ENCODE measurements at regions of chr6 and their contacts with region 1.

Region 1: GRCh38 chr6:31958741-31959739 is at the starts of genes NELFE and SKIC2:
- DNase-seq: peak; percentile 98 to 100 (median 99)
- H3K4me3 ChIP-seq: peak within 1 kb of the TSS; percentile 61 to 100 (median 94)
- H3K27ac ChIP-seq: peak within 1 kb of the TSS in 58 of 59 donors; percentile 10 to 93 (median 81)
- H3K27me3 ChIP-seq: no peaks in the 10 kb centered on the region
- CTCF ChIP-seq: peak in 26 of 56 donors; percentile 4 to 53 (median 26)
- total RNA-seq, gene NELFE: 28.5 to 67.8 (median 43.3) TPM
- total RNA-seq, gene SKIC2: 48.6 to 115 (median 68.4) TPM

Region 2: GRCh38 chr6:31702819-31703522 is 256.1 kb before region 1 on chr6 and contains the start of gene ABHD16A:
- intact Hi-C with region 1: loop called in 1 of 2 experiments (anchors 5 kb)
- DNase-seq: peak; percentile 98 to 99 (median 99)
- H3K4me3 ChIP-seq: peak within 1 kb of the TSS; percentile 69 to 98 (median 88)
- H3K27ac ChIP-seq: peak within 1 kb of the TSS; percentile 58 to 99 (median 97)
- H3K27me3 ChIP-seq: no peaks in the 10 kb centered on the region
- CTCF ChIP-seq: peak in 38 of 56 donors; percentile 7 to 49 (median 33)
- total RNA-seq, gene ABHD16A: 43.5 to 81.1 (median 56.8) TPM

Region 3: DNA sequence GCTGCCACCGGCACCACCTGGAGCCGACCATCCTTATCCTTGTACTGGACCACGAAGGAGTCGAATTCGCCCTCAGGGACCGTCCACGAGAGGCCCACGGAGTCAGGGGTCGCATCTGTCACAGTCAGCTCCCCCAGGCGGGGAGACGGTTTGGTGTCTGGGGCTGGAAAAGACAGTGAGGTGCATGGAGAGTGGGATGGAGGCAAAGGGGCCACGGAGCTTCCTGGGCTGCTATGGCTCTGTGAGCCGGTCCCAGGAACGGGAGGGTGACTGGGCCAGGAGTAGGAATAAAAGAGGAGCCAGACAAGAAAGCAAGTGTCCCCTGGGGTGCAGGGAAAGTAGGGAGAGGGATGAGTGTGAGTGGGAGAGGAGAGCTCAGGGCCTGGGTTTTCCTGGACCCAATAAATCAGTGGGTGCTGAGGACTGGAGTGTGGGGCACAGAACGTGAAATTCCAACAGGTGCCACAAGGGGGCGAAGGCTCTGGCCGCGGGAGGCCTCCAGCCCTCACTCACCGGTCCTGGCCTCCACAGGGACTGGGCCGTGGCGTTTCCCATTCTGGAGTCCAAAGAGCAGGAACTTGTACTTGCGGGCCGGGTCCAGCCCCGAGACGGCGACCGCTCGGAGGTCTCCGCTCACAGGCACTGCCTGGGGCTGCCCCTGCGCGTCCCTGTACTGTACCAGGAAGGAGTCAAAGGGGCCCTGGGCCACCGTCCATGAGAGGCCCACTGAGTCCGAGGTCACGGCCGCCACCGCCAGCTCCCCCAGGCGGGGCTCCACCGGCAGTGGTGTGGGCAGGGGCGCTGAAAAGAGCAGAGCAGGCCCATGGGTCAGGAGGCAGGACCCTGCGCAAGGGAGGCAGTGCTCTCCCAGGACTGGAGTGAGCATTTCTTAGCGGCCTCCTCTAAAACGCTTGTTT is 89.1 kb after region 1 on chr6:
- intact Hi-C with region 1: no loop called
- DNase-seq: peak in 7 of 10 donors; percentile 40 to 77 (median 52)
- H3K4me3 ChIP-seq: no peak overlapping the region
- H3K27ac ChIP-seq: peak overlapping the region in 15 of 59 donors; percentile 4 to 69 (median 36)
- H3K27me3 ChIP-seq: no peaks in the 10 kb centered on the region
- CTCF ChIP-seq: peak; percentile 58 to 89 (median 79)

Region 4: GRCh38 chr6:32092760-32093497 is 133.9 kb after region 1 on chr6:
- intact Hi-C with region 1: no loop called
- DNase-seq: peak in 5 of 10 donors; percentile 35 to 88 (median 57)
- H3K4me3 ChIP-seq: no peak overlapping the region
- H3K27ac ChIP-seq: peak overlapping the region in 49 of 59 donors; percentile 4 to 83 (median 58)
- H3K27me3 ChIP-seq: peaks cover 0 to 26% (median 13%) of the 10 kb centered on the region in 45 donors
- CTCF ChIP-seq: no peak

Measured in dorsolateral prefrontal cortex (tissue), 120 donors.